Right ventricle myocardium superior (tissue), 1 donor: ENCODE measurements at regions of chr17 and their contacts with region 1.

Region 1: GRCh38 chr17:74457146-74457819 is 9.2 kb upstream of the CD300A start:
- DNase-seq: peak; percentile 92
- ATAC-seq: no peak

Region 2: GRCh38 chr17:74379495-74380085 is 77.7 kb before region 1 on chr17:
- intact Hi-C with region 1: loop called (anchors 1 kb)
- DNase-seq: peak; percentile 96
- ATAC-seq: peak; percentile 96

Region 3: GRCh38 chr17:74497471-74497870 is 40.2 kb after region 1 on chr17:
- intact Hi-C with region 1: no loop called
- DNase-seq: no peak
- ATAC-seq: no peak